Lower leg skin (tissue), 4 donors: ENCODE measurements at regions of chr4 and their contacts with region 1.

Region 1: DNA sequence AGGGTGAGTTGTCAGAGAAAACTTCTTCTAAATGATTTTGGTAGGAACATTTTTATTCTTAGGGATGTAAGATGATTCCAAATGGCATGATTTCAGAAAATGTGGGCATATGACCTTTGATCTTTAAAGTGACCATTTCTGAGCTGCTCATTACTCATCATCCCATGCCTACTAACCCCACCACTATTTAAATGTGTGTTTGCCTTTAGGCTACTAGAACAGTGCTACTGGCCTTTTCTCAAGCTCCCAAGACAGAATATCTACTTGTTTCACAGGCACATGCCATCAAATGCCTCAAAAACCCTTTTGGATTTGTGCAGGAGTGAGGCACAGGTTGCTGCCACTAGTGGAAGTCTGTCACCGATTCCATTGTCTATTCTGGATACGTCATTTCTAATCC is 428.2 kb downstream of the ADAM29 start:
- DNase-seq: no peak
- H3K4me3 ChIP-seq: no peak overlapping the region
- CTCF ChIP-seq: no peak
- POLR2A ChIP-seq: no peak

Region 2: DNA sequence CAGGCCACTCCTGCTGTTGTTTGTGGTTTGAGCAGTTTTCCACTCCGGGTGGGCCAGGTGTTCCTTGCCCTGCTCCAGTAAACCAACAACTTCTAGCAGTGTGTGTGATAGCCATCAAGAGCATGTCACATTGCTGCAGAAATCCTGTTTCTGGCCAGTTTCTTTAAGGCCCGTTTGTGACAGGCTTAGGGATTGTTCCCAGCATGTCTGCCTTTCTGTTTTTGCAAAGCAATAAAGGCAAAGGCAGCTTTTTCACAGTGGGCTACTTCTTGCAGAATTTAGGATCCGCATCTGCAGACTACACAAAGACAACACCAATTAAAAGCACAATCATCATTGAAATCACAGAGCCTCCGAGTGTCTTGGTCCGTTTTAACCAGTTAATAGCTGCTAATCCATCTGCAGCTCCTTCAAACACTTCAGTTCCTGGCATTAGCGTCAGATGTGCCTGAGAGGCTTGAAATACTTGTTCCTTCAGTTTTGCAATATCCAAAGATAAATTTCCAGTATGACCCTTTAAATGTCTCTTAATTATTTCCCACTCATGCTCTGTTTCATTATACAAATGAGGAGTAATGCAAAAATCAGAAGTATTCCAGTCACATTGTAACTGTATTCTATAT is 363.1 kb before region 1 on chr4:
- intact Hi-C with region 1: loop called (anchors 5 kb)
- DNase-seq: no peak
- H3K4me3 ChIP-seq: no peak overlapping the region
- CTCF ChIP-seq: no peak
- POLR2A ChIP-seq: no peak